Endothelial cell of umbilical vein (primary cell): ENCODE measurements at regions of chr11 and their contacts with region 1.

Region 1: GRCh38 chr11:57530596-57531507 is at the start of gene TIMM10:
- DNase-seq: peak; percentile 96
- H3K4me3 ChIP-seq: peak within 1 kb of the TSS; percentile 53 to 74 (median 69)
- H3K27ac ChIP-seq: peak within 1 kb of the TSS; percentile 48
- H3K4me1 ChIP-seq: peaks cover 21% of the 10 kb centered on the region
- H3K27me3 ChIP-seq: peaks cover 0 to 2% of the 10 kb centered on the region in 2 experiments
- CTCF ChIP-seq: no peak
- POLR2A ChIP-seq: peak; percentile 45
- total RNA-seq, gene TIMM10: 64.2 and 105 TPM in 2 replicates

Region 2: DNA sequence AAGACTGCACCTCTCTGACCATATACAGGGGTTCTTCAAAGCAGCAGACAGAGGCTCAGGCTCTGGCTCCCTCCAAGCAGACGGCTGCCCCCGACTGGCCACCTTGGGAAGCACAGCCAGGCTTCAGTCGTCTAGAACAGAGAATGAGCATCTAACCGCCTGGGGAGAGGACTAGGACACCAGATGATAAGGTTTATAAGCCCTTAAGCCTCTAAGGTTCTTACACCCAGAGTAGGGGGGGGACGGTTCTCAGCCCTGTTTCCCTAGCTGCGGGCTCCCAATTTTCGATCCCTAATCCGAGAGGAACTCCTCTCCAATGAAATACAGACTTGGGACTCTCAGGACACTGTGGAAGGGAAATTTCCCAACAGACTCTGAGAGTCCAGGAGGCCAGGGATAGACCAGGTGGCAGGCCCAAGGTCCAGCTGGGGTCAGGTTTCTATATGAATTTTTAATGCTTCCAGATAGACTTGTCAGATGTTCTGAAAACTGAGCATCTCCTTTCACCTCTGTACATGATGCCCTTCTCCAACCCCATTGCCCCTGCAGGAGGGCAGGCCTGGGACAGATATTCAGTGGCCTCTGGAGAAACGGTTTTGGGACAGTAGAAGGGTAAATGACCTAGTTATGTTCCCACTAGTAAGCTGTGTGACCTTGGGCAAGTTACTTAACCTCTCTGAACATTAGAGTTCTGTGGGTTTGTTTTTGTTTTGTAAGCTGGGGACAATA is 50.3 kb before region 1 on chr11:
- CTCF ChIA-PET with region 1: interaction called, 10 read pairs
- POLR2A ChIA-PET with region 1: no interaction called
- dilution Hi-C with region 1: no loop called
- intact Hi-C with region 1: no loop called
- DNase-seq: peak; percentile 46
- H3K4me3 ChIP-seq: no peak overlapping the region
- H3K27ac ChIP-seq: no peak overlapping the region
- H3K4me1 ChIP-seq: peaks cover 9% of the 10 kb centered on the region
- H3K27me3 ChIP-seq: peaks cover 7 to 28% of the 10 kb centered on the region in 2 experiments
- CTCF ChIP-seq: peak; percentile 75 to 85
- POLR2A ChIP-seq: no peak

Region 3: DNA sequence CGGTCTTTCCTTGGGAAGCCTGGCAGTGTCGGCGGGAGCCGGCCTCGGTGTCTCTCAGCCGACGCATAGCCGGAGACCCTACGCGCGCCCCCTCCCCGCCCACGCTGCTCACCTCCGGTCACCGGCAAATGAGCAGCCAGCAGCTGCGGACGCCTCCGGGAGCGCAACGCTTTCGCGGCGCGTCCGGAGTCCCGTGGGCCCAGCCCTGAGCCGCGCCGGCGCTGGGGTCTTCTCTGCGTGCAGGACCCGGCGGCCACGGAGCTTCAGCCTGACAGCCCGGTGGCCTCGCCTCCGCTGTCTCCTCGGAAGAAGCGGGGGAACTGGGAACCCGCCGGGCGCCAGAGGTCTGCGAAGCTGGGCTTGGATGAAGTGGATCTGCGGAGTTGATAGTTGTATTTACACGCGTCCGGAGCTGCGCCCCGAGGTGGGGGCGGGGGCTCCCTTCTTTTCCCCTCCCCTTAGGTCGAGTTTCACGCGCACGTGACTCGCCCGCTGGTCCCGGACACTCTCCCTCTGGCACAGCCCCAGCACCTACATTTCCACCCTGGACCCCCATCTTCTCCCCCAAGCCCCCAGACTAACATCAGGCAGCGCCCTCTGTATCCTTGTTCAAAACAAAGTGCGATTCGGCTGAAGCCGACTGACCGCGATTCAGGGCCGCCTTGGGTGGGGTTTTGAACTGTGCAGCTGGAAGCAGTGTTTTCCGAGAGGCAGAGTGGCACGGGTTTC is 15.4 kb before region 1 on chr11 and contains the start of gene SLC43A1:
- CTCF ChIA-PET with region 1: interaction called, 64 read pairs
- POLR2A ChIA-PET with region 1: no interaction called
- dilution Hi-C with region 1: no loop called
- intact Hi-C with region 1: loop called (anchors 1 kb)
- DNase-seq: peak; percentile 69
- H3K4me3 ChIP-seq: peak within 1 kb of the TSS; percentile 64 to 79 (median 68)
- H3K27ac ChIP-seq: no peak within 1 kb of the TSS
- H3K4me1 ChIP-seq: peaks cover 9% of the 10 kb centered on the region
- H3K27me3 ChIP-seq: no peaks in the 10 kb centered on the region
- CTCF ChIP-seq: no peak
- POLR2A ChIP-seq: peak; percentile 25
- total RNA-seq, gene SLC43A1: 11.3 and 13.7 TPM in 2 replicates

Region 4: GRCh38 chr11:57644748-57645688 is 114.2 kb after region 1 on chr11:
- CTCF ChIA-PET with region 1: interaction called, 20 read pairs
- POLR2A ChIA-PET with region 1: interaction called, 3 read pairs
- dilution Hi-C with region 1: no loop called
- intact Hi-C with region 1: loop called (anchors 1 kb)
- DNase-seq: peak; percentile 68
- H3K4me3 ChIP-seq: no peak overlapping the region
- H3K27ac ChIP-seq: no peak overlapping the region
- H3K4me1 ChIP-seq: peaks cover 14% of the 10 kb centered on the region
- H3K27me3 ChIP-seq: peaks cover 38 to 44% of the 10 kb centered on the region in 2 experiments
- CTCF ChIP-seq: peak; percentile 78 to 86
- POLR2A ChIP-seq: no peak

Region 5: DNA sequence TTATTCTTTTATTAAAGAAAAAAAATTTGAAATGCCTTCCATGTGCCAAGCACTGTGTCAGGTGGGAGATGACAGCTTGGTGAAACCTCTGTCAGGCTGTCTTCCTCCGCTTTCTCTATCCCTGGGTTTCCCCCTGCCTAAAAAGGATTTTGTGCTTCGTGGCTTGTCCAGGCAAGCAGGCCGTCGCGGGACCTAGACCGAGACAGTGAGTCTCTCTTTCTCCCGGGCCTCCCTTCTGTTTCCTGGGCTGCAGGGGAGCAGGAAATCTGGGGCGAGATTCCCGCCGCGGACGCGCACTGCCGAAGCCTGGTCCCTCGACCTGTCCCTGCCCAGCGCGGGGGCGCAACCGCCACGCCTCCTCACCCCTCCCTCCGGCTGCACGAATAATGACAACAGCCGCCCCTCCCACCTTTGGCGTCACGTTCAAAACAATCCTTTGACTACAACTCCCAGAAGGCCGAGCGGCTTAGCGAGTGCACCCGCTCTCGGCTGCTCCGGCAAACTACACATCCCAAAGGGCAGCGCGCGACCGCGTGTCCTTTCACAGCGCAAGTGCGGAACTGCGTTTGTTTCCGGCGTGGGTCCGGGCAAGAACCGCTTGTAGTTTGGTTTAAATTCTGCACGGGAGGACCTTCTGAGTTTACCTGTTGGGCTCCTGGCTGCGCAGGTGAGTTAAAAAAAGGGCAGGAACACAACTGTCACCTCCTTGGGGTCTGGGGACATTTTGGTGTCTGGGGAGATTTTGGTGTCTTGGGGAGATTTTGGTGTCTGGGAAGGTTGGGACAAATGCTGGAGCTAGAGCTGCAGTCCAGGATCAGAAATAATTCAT is 126.6 kb after region 1 on chr11 and contains the start of gene CLP1:
- CTCF ChIA-PET with region 1: no interaction called
- POLR2A ChIA-PET with region 1: no interaction called
- dilution Hi-C with region 1: no loop called
- intact Hi-C with region 1: loop called (anchors 1 kb)
- DNase-seq: peak; percentile 99
- H3K4me3 ChIP-seq: peak within 1 kb of the TSS; percentile 59 to 98 (median 90)
- H3K27ac ChIP-seq: peak within 1 kb of the TSS; percentile 75
- H3K4me1 ChIP-seq: peaks cover 4% of the 10 kb centered on the region
- H3K27me3 ChIP-seq: no peaks in the 10 kb centered on the region
- CTCF ChIP-seq: no peak
- POLR2A ChIP-seq: peak; percentile 70
- total RNA-seq, gene CLP1: 17.9 and 20.9 TPM in 2 replicates

Region 6: GRCh38 chr11:58276151-58276550 is 745.3 kb after region 1 on chr11:
- CTCF ChIA-PET with region 1: no interaction called
- POLR2A ChIA-PET with region 1: no interaction called
- dilution Hi-C with region 1: no loop called
- intact Hi-C with region 1: no loop called
- DNase-seq: no peak
- H3K4me3 ChIP-seq: no peak overlapping the region
- H3K27ac ChIP-seq: no peak overlapping the region
- H3K4me1 ChIP-seq: no peaks in the 10 kb centered on the region
- H3K27me3 ChIP-seq: no peaks in the 10 kb centered on the region
- CTCF ChIP-seq: no peak
- POLR2A ChIP-seq: no peak